Dendritic cell treated with granulocyte-macrophage colony-stimulating factor and Interleukin-4, amounts not matched to agents 40 ng/mL and 50 ng/mL, for 4 days (primary cell): ENCODE measurements at regions of chr15 and their contacts with region 1.

Region 1: DNA sequence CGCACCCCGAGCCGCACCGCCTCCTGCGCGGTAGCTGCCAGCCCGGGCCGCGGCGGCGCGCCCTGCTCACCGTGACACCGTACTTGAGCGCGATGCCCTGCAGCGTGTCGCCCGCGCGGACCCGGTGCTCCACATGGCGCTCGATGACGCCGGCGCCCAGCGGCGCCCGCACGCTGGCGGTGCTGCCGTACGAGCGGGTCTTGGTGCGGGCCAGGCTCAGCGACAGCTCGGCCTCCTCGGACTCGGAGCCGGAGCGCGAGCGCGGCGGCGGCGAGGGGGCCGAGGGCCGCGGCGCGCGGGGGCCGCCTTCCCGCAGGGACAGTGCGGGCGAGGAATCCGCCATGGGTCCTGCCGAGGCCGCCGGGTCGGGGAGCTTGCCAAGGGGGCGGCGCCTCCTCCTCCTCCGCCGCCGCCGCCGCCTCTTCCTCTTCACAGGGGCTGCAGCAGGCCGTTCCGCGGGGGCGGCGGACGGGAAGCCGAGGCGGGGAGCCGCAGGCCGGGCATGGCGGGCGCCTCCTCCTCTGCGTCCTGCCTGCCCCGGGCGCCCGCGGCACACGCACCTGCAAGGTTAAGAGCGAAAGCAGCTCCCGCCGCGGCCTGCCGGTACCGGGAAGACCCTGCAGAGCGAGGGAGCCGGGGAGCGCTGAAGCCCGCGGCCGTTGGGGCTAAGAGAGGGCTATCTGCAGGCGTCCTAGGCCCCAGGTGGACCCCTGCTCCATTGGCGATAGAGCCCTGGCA is at the start of gene LYSMD2:
- H3K4me3 Mint-ChIP-seq: peak within 1 kb of the TSS; percentile 84
- H3K27ac Mint-ChIP-seq: peak within 1 kb of the TSS; percentile 68
- H3K4me1 Mint-ChIP-seq: peaks cover 53% of the 10 kb centered on the region
- H3K27me3 Mint-ChIP-seq: peaks cover 13% of the 10 kb centered on the region

Region 2: GRCh38 chr15:51681303-51681963 is 56.0 kb before region 1 on chr15 and contains the start of gene SCG3:
- intact Hi-C with region 1: no loop called
- H3K4me3 Mint-ChIP-seq: peak within 1 kb of the TSS; percentile 66
- H3K27ac Mint-ChIP-seq: no peak within 1 kb of the TSS
- H3K4me1 Mint-ChIP-seq: peaks cover 14% of the 10 kb centered on the region
- H3K27me3 Mint-ChIP-seq: peaks cover 34% of the 10 kb centered on the region

Region 3: DNA sequence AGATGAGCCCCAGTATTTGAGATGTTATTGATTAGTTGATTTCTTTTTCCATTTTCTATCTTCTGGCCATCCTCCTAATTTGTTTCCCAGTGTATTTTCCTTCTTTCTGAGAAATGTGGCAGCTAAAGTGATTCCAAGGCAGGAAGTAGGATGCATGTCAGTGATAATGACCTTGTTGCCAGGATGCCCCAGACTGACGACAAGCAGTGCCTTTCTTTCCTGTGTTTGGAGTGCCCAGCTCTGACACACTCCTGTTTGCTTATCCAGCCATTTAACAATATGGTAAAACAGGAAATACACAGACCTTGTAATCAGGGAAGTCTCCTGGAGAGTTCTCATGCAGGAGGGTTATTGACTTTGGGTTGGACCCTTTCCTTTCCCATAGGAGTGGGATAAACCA is 34.3 kb after region 1 on chr15:
- intact Hi-C with region 1: loop called (anchors 2 kb)
- H3K4me3 Mint-ChIP-seq: no peak overlapping the region
- H3K27ac Mint-ChIP-seq: peak overlapping the region; percentile 47
- H3K4me1 Mint-ChIP-seq: peaks cover 43% of the 10 kb centered on the region
- H3K27me3 Mint-ChIP-seq: no peaks in the 10 kb centered on the region